Dorsolateral prefrontal cortex (tissue), 120 donors: ENCODE measurements at regions of chrX and their contacts with region 1.

Region 1: GRCh38 chrX:81121513-81122382 is 80.0 kb downstream of the HMGN5 start:
- DNase-seq: peak; percentile 47 to 91 (median 88)
- H3K4me3 ChIP-seq: peak overlapping the region; percentile 34 to 76 (median 60)
- H3K27ac ChIP-seq: peak overlapping the region in 29 of 59 donors; percentile 6 to 70 (median 37)
- H3K27me3 ChIP-seq: peaks cover 0 to 82% (median 6%) of the 10 kb centered on the region in 45 donors
- CTCF ChIP-seq: peak in 7 of 56 donors; percentile 3 to 25 (median 15)

Region 2: GRCh38 chrX:80808160-80808735 is 313.5 kb before region 1 on chrX:
- intact Hi-C with region 1: loop called in 1 of 2 experiments (anchors 5 kb)
- DNase-seq: peak; percentile 58 to 89 (median 80)
- H3K4me3 ChIP-seq: peak overlapping the region; percentile 22 to 76 (median 63)
- H3K27ac ChIP-seq: peak overlapping the region; percentile 18 to 94 (median 83)
- H3K27me3 ChIP-seq: peaks cover 0 to 24% (median 0%) of the 10 kb centered on the region in 45 donors
- CTCF ChIP-seq: no peak

Region 3: GRCh38 chrX:81206476-81206875 is 84.7 kb after region 1 on chrX:
- intact Hi-C with region 1: no loop called
- DNase-seq: no peak
- H3K4me3 ChIP-seq: no peak overlapping the region
- H3K27ac ChIP-seq: peak overlapping the region in 1 of 59 donors; percentile 24
- H3K27me3 ChIP-seq: peaks cover 0 to 43% (median 0%) of the 10 kb centered on the region in 45 donors
- CTCF ChIP-seq: no peak

Region 4: DNA sequence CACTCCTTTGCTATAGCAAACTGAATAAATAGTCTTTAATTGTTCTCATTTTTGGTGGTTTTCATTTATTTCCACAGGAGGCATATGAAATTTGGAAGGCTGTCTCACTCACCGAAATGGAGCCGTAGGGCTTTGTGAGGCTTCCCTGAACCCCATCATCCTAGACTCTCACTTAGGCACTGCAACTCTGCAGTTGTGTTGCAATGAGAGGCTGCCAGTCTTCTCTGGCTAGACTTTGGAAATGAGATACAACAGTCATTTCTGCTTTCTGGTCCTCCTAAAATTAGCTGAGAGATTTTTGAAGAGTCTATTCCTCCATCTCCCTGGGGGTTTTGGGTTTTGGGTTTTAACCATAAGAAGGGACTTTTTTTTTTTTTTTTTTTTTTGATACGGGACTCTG is 226.6 kb after region 1 on chrX:
- intact Hi-C with region 1: no loop called
- DNase-seq: no peak
- H3K4me3 ChIP-seq: no peak overlapping the region
- H3K27ac ChIP-seq: no peak overlapping the region
- H3K27me3 ChIP-seq: peaks cover 0 to 30% (median 6%) of the 10 kb centered on the region in 45 donors
- CTCF ChIP-seq: no peak